ENCODE measurements at regions of chr13 and their contacts with region 1.

Region 1: GRCh38 chr13:51286135-51287002 is 53.1 kb upstream of the SERPINE3 start:
- DNase-seq: peak; percentile 83 to 94
- ATAC-seq: peak; percentile 79
- H3K4me3 ChIP-seq: no peak overlapping the region
- H3K27ac ChIP-seq: no peak overlapping the region
- H3K4me1 ChIP-seq: no peaks in the 10 kb centered on the region
- H3K27me3 ChIP-seq: no peaks in the 10 kb centered on the region

Region 2: GRCh38 chr13:51125498-51126226 is 160.7 kb before region 1 on chr13:
- intact Hi-C with region 1: loop called (anchors 5 kb)
- DNase-seq: peak in 1 of 2 donors; percentile 60
- ATAC-seq: peak; percentile 67
- H3K4me3 ChIP-seq: no peak overlapping the region
- H3K27ac ChIP-seq: no peak overlapping the region
- H3K4me1 ChIP-seq: no peaks in the 10 kb centered on the region
- H3K27me3 ChIP-seq: no peaks in the 10 kb centered on the region

Region 3: DNA sequence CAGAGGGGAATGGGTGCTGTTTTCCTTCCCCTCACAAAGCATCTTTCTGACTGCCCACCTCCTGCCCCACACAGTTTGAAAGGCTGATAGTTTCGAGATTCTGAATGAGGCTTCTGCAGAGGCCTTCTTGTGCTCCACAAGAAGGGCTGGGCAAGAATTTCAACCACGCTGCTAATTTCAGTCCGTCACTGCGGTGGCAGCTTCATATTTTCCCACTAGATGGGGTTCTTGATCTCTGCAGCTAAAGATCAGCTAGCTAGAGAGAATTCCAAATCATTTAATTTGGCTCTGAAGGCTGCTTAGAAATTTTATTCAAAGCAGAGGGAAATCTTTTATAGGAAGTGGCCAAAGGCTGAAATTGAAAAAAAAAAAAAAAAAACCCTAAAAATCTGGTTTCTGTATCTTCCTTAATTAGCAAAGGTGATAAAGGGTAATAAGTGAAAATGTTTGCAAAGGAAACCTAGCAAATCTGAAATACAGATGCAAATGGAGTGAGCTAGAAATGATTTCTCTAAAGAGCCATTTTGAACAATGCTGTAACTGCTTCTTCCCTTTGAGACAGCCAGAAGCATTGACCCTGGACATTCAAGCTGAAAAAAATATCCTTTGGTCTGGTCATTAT is 137.3 kb before region 1 on chr13:
- intact Hi-C with region 1: loop called (anchors 2 to 5 kb)
- DNase-seq: no peak
- ATAC-seq: peak; percentile 73
- H3K4me3 ChIP-seq: no peak overlapping the region
- H3K27ac ChIP-seq: no peak overlapping the region
- H3K4me1 ChIP-seq: no peaks in the 10 kb centered on the region
- H3K27me3 ChIP-seq: peaks cover 0 to 2% of the 10 kb centered on the region in 2 donors

Region 4: GRCh38 chr13:51222037-51222685 is 64.2 kb before region 1 on chr13 and contains the start of gene FAM124A:
- intact Hi-C with region 1: loop called (anchors 5 kb)
- DNase-seq: peak; percentile 51 to 87
- ATAC-seq: peak; percentile 85
- H3K4me3 ChIP-seq: peak within 1 kb of the TSS; percentile 12 to 80
- H3K27ac ChIP-seq: no peak within 1 kb of the TSS
- H3K4me1 ChIP-seq: no peaks in the 10 kb centered on the region
- H3K27me3 ChIP-seq: no peaks in the 10 kb centered on the region
- total RNA-seq, gene FAM124A: 7.2 to 9.2 TPM